Activated B cell treated with CpG ODN at 0.5 μM for 24 hours (primary cell): ENCODE measurements at regions of chr6 and their contacts with region 1.

Region 1: GRCh38 chr6:53244958-53245357 is 96.3 kb upstream of the GCM1 start:
- DNase-seq: peak; percentile 42
- ATAC-seq: peak; percentile 83
- H3K4me3 Mint-ChIP-seq: peak overlapping the region; percentile 63
- H3K27ac Mint-ChIP-seq: peak overlapping the region; percentile 96
- H3K4me1 Mint-ChIP-seq: peaks cover 93% of the 10 kb centered on the region
- H3K27me3 Mint-ChIP-seq: no peaks in the 10 kb centered on the region
- CTCF ChIP-seq: no peak

Region 2: GRCh38 chr6:53020005-53020744 is 224.8 kb before region 1 on chr6:
- CTCF ChIA-PET with region 1: no interaction called
- POLR2A ChIA-PET with region 1: no interaction called
- intact Hi-C with region 1: no loop called
- DNase-seq: no peak
- ATAC-seq: no peak
- H3K4me3 Mint-ChIP-seq: no peak overlapping the region
- H3K27ac Mint-ChIP-seq: no peak overlapping the region
- H3K4me1 Mint-ChIP-seq: no peaks in the 10 kb centered on the region
- H3K27me3 Mint-ChIP-seq: no peaks in the 10 kb centered on the region
- CTCF ChIP-seq: no peak

Region 3: GRCh38 chr6:53189554-53189953 is 55.4 kb before region 1 on chr6:
- CTCF ChIA-PET with region 1: interaction called, 3 read pairs
- POLR2A ChIA-PET with region 1: interaction called, 10 read pairs
- intact Hi-C with region 1: loop called (anchors 1 kb)
- DNase-seq: no peak
- ATAC-seq: no peak
- H3K4me3 Mint-ChIP-seq: no peak overlapping the region
- H3K27ac Mint-ChIP-seq: no peak overlapping the region
- H3K4me1 Mint-ChIP-seq: peaks cover 48% of the 10 kb centered on the region
- H3K27me3 Mint-ChIP-seq: no peaks in the 10 kb centered on the region
- CTCF ChIP-seq: no peak

Region 4: DNA sequence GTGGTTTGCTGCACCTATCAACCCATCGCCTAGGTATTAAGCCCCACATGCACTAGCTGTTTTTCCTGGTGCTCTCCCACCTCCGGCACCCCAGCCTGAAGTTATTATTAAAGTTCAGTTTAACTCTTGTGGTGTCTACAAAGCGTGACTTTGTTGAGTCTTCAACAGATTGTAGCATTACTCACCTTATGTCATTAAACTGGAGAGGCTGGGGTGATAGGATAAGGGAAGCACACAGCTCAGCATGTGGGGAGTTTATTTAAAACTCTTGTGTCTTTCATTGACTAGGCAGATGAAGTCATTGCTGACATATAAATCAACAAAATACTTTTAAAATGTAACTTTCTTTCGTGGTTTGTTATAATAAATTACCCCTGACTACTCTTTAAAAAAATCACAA is 11.6 kb before region 1 on chr6:
- CTCF ChIA-PET with region 1: interaction called, 8 read pairs
- POLR2A ChIA-PET with region 1: interaction called, 21 read pairs
- intact Hi-C with region 1: loop called (anchors 1 kb)
- DNase-seq: no peak
- ATAC-seq: no peak
- H3K4me3 Mint-ChIP-seq: no peak overlapping the region
- H3K27ac Mint-ChIP-seq: peak overlapping the region; percentile 97
- H3K4me1 Mint-ChIP-seq: peaks cover 80% of the 10 kb centered on the region
- H3K27me3 Mint-ChIP-seq: no peaks in the 10 kb centered on the region
- CTCF ChIP-seq: no peak

Region 5: DNA sequence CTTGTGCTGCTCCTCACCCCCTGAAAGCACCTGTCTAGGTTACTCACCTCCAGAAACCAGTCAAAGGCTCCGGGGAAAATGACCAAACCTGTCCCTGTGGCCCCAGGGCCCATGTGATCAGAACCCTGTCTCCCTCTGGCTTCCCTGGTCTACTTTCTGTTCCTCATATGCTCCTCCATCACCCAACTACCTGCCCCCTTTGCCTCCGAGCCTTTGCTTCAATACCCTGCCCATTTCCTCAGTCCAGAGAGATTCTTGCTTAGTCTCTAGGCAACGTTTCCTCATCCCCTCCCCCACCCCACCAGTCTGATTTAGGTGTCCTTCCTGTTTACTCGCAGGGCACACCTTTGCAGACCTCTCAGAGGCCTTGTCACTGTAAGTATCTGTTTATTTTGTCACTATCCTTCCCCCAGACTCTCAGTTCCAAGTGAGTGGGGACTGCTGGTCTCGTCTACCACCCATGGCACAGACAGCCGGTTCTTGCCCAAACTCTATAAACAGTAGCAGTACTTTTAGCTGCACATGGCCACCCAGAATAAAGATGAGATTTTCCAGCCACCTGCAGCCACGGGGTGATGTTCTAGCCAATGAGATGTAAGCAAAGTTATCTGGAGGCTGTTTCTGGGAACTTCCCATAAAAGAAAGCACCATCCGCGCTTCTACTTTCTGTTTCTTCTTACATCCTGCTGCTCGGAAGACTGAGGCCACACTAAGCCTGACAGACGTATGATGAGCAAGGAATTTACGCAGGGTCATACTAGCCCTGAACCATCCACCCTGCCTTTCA is 90.4 kb after region 1 on chr6:
- CTCF ChIA-PET with region 1: no interaction called
- POLR2A ChIA-PET with region 1: no interaction called
- intact Hi-C with region 1: loop called (anchors 1 kb)
- DNase-seq: peak; percentile 56
- ATAC-seq: peak; percentile 85
- H3K4me3 Mint-ChIP-seq: peak overlapping the region; percentile 84
- H3K27ac Mint-ChIP-seq: peak overlapping the region; percentile 97
- H3K4me1 Mint-ChIP-seq: peaks cover 93% of the 10 kb centered on the region
- H3K27me3 Mint-ChIP-seq: no peaks in the 10 kb centered on the region
- CTCF ChIP-seq: no peak